Heart left ventricle (tissue), 16 donors: ENCODE measurements at regions of chr10 and their contacts with region 1.

Region 1: DNA sequence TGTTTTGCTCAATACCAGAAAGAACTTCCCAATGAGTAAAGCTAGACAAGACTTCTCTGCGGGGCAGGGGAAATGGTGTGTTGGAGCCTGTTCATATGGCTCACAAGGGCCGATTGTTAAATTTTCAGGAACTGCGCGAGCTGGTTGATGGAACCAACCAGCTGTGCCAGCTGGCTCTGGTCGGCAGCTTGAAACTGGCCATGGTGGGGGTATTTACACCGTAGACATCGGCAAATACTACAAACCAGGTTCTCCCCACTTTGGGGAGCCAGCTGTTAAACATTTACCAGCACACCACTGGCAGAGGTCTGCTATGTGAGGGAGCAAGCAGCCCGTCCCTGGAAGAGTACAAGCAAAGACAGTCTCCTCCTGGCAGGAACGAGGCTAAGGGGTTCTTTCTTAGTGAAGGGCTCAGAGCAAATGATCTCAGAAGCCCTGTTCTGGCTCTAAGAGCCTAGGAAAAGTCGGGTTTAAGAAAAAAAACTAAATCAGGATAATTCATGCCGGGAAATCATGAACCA is 8.8 kb upstream of the ZMIZ1 start:
- DNase-seq: peak in 2 of 5 donors; percentile 17 to 24
- ATAC-seq: no peak
- H3K4me3 ChIP-seq: no peak overlapping the region
- H3K27ac ChIP-seq: no peak overlapping the region
- H3K4me1 ChIP-seq: peaks cover 0 to 10% (median 4%) of the 10 kb centered on the region in 12 donors
- H3K27me3 ChIP-seq: no peaks in the 10 kb centered on the region
- CTCF ChIP-seq: no peak
- POLR2A ChIP-seq: no peak

Region 2: GRCh38 chr10:78852466-78853240 is 207.3 kb before region 1 on chr10:
- intact Hi-C with region 1: loop called in 4 of 10 experiments (anchors 5 to 10 kb)
- DNase-seq: no peak
- ATAC-seq: peak in 1 of 4 donors; percentile 29
- H3K4me3 ChIP-seq: no peak overlapping the region
- H3K27ac ChIP-seq: no peak overlapping the region
- H3K4me1 ChIP-seq: peaks cover 0 to 17% (median 9%) of the 10 kb centered on the region in 12 donors
- H3K27me3 ChIP-seq: no peaks in the 10 kb centered on the region
- CTCF ChIP-seq: peak in 9 of 12 donors; percentile 15 to 45 (median 30)
- POLR2A ChIP-seq: no peak

Region 3: GRCh38 chr10:78981257-78981969 is 78.5 kb before region 1 on chr10:
- intact Hi-C with region 1: loop called in 4 of 10 experiments (anchors 2 to 10 kb)
- DNase-seq: no peak
- ATAC-seq: no peak
- H3K4me3 ChIP-seq: no peak overlapping the region
- H3K27ac ChIP-seq: no peak overlapping the region
- H3K4me1 ChIP-seq: peaks cover 0 to 19% (median 0%) of the 10 kb centered on the region in 12 donors
- H3K27me3 ChIP-seq: no peaks in the 10 kb centered on the region
- CTCF ChIP-seq: no peak
- POLR2A ChIP-seq: no peak

Region 4: DNA sequence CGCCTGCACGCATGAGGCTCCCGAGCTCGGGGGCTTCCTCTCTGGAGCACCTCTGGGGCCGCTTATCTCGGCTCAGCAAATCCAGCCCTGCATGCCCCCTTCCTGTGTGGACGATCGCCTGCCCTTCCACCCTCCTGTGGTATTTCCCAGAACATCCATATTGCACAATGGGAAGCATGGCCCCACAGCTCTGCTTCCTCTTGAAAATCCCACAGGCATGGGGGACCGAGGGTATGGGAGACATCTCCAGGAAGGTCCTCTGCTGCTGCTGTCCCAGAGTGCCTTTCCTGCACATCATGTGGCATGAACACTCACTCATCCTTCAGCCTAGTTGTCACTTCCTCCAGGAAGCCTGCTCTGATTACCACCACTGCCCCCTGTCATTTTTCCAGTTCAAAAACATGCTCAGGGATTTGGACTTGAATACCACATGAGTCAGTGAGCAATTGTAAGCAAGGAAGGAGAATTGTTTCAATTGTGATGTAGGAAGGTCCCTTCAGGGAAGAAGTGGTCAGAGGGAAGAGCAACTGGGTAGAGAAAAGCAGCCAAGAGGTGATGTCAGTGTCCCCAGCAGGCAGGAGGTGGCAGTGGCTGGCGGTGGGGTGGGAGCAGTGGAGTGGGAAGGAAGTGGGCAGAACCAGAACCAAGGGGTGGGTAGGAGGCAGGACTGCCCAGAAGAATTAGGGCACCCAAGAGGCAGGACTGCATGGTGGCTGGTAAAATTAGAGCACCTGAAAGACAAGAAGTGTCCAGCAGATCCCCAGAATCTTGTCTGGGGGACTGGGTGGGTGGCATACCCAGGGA is 58.6 kb before region 1 on chr10:
- intact Hi-C with region 1: no loop called
- DNase-seq: peak in 1 of 5 donors; percentile 44
- ATAC-seq: peak in 1 of 4 donors; percentile 12
- H3K4me3 ChIP-seq: no peak overlapping the region
- H3K27ac ChIP-seq: no peak overlapping the region
- H3K4me1 ChIP-seq: peaks cover 0 to 18% (median 5%) of the 10 kb centered on the region in 12 donors
- H3K27me3 ChIP-seq: no peaks in the 10 kb centered on the region
- CTCF ChIP-seq: no peak
- POLR2A ChIP-seq: no peak

Region 5: GRCh38 chr10:79025199-79025832 is 34.6 kb before region 1 on chr10:
- intact Hi-C with region 1: loop called in 2 of 10 experiments (anchors 5 kb)
- DNase-seq: peak in 3 of 5 donors; percentile 43 to 56 (median 48)
- ATAC-seq: peak in 2 of 4 donors; percentile 33 to 52
- H3K4me3 ChIP-seq: no peak overlapping the region
- H3K27ac ChIP-seq: peak overlapping the region in 3 of 12 donors; percentile 44 to 88 (median 73)
- H3K4me1 ChIP-seq: peaks cover 0 to 28% (median 11%) of the 10 kb centered on the region in 12 donors
- H3K27me3 ChIP-seq: no peaks in the 10 kb centered on the region
- CTCF ChIP-seq: no peak
- POLR2A ChIP-seq: no peak

Region 6: DNA sequence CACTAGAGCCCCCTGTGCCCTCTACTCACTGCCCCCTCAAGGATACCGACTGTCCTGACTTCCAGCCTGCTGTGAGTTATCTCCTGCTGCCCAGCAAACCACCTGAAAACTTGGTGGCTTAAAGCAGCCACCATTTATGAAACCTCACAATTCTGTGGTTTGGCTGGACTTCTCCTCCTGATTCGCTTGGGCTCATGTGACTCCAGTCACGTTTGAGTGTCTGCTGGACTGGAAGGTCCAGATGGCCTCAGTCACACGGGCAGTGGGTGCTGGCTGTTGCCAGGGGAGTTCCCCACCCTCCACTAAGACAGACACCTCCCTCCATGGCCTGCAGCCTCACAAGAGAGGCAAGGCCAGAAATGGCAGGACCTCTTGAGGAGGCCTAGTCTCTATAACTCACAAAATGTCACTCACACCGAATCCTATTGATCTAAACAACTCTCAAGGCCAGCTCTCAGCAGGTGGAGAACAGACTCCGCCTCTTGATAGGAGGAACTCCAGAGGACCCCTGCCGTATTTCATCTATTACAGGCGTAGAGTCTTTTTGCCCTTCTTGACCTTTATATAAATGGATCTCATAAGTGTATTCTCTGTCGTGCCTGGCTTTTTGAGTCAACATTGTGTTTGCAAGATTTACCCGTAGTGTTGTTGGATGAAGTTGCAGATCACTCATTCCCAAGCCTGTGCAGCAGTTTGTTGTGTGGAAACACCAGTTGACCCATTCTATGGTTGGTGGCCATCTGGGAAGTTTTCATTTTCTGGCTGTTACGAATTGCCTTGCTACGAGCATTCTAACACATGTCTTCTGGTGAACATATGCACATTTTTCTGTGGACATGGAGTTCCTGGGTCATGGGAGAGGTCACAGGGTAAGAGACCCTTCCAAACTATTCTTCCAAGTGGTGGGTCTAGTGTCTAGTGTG is 57.1 kb after region 1 on chr10:
- intact Hi-C with region 1: no loop called
- DNase-seq: peak in 2 of 5 donors; percentile 73 to 81
- ATAC-seq: peak in 2 of 4 donors; percentile 5 to 34
- H3K4me3 ChIP-seq: no peak overlapping the region
- H3K27ac ChIP-seq: peak overlapping the region in 11 of 12 donors; percentile 8 to 94 (median 61)
- H3K4me1 ChIP-seq: peaks cover 18 to 99% (median 75%) of the 10 kb centered on the region in 12 donors
- H3K27me3 ChIP-seq: no peaks in the 10 kb centered on the region
- CTCF ChIP-seq: no peak
- POLR2A ChIP-seq: no peak

Region 7: DNA sequence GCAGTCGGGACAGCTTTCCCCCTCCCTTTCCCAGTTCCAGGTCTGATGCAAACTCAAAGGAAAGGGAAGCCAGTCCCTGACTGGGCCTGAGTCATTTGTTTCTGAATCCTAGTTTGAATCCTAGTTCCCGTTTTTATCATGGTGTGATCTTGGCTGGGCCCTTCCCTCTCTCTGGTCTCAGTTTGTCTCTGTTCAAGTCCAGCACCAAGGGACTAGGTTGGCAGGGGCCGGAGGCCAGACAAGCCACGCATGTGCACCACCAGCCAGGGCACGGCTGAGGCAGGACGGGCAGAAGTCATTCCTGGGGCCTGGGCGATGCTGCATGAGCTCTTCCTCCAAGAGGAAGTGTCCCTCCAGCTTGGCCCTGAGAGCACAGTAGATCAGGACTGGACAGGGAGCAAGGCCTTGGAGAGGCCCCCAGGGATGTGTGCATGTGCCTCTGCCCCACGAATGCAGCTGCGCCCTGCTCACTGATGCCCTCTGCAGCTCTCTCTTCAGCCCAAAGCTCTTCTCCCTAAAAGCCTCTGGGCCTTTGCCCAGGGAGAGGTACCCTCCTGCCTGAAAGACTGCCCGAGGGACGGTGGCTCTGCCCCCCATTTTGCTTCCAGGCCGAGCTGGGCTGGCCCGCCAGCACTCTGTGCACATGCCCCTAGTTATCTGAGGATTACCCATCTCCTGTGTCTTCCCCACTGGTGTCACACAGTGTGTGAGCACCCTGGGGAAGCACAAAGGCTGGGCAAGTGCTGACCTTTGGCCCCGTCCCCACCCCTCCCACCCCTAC is 95.6 kb after region 1 on chr10:
- intact Hi-C with region 1: no loop called
- DNase-seq: peak in 3 of 5 donors; percentile 72 to 74 (median 73)
- ATAC-seq: peak in 2 of 4 donors; percentile 2 to 13
- H3K4me3 ChIP-seq: no peak overlapping the region
- H3K27ac ChIP-seq: peak overlapping the region; percentile 62 to 98 (median 94)
- H3K4me1 ChIP-seq: peaks cover 55 to 100% (median 99%) of the 10 kb centered on the region in 12 donors
- H3K27me3 ChIP-seq: no peaks in the 10 kb centered on the region
- CTCF ChIP-seq: peak in 7 of 12 donors; percentile 18 to 52 (median 25)
- POLR2A ChIP-seq: no peak